Colonic mucosa (tissue), 4 donors: ENCODE measurements at regions of chr19 and their contacts with region 1.

Region 1: DNA sequence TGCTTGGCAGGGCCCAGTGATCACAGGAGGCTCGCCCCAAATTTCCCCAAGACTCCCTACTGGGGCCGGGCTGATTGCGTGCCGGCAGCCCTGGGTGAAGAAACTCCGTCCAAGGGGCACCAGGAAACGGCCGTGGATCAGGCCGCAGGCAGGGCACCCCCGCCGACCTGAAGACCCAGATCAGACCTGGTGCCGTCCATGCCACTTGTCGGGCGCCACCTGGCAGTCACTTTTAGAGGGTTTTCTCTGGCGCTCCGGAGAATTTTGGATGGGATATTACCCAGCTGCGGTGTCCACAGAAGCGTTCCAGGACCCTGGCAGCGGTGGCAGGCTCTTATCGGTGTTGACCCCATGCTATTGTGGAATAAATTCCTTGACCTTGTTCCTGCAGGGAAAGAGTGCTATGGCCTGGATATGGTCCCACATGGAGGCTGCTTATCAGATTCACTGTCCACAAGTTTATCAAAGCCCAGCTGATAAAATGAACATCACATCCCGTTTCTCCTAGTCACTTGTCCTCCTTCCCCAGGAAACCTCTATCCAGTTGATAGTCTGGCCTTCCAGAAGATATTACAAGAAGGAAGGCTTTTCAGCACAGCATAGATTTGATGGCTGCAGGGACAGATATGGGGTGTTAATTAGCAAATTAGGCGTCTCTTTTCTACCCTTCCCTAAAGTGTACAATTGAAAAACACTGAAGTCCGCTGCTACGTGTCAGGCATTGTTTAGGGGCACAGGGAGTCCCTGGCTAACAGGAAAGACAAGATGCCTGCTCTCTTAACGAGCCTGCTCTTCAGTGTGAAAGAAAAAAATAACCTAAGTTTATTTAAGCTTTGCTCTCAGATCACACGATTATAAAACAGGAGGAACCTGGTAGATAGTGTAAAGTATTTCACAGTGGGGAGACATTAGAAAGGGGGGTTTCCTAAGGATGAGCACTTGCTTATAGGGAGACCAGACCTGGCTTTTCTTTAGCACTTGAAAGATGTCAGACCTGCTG is 38.4 kb downstream of the IGFL2 start:
- DNase-seq: no peak
- H3K4me3 ChIP-seq: no peak overlapping the region
- H3K27ac ChIP-seq: no peak overlapping the region
- H3K4me1 ChIP-seq: no peaks in the 10 kb centered on the region
- H3K27me3 ChIP-seq: no peaks in the 10 kb centered on the region
- CTCF ChIP-seq: no peak

Region 2: GRCh38 chr19:46030812-46031550 is 155.4 kb before region 1 on chr19:
- intact Hi-C with region 1: loop called (anchors 5 kb)
- DNase-seq: no peak
- H3K4me3 ChIP-seq: no peak overlapping the region
- H3K27ac ChIP-seq: no peak overlapping the region
- H3K4me1 ChIP-seq: no peaks in the 10 kb centered on the region
- H3K27me3 ChIP-seq: no peaks in the 10 kb centered on the region
- CTCF ChIP-seq: no peak

Region 3: GRCh38 chr19:46339446-46339845 is 153.0 kb after region 1 on chr19:
- intact Hi-C with region 1: no loop called
- DNase-seq: no peak
- H3K4me3 ChIP-seq: no peak overlapping the region
- H3K27ac ChIP-seq: no peak overlapping the region
- H3K4me1 ChIP-seq: no peaks in the 10 kb centered on the region
- H3K27me3 ChIP-seq: no peaks in the 10 kb centered on the region
- CTCF ChIP-seq: no peak